Activated CD8-positive, alpha-beta memory T cell treated with anti-CD3 and anti-CD28 coated beads, Interleukin-2, amount 10 ng/mL, durations not matched to agents 7 days and 5 days (primary cell): ENCODE measurements at regions of chr11 and their contacts with region 1.

Region 1: GRCh38 chr11:124953753-124954589 is at the start of gene CCDC15:
- DNase-seq: peak; percentile 98
- ATAC-seq: peak; percentile 94
- H3K4me3 Mint-ChIP-seq: no peak within 1 kb of the TSS
- H3K27ac Mint-ChIP-seq: no peak within 1 kb of the TSS
- H3K4me1 Mint-ChIP-seq: peaks cover 20% of the 10 kb centered on the region
- H3K27me3 Mint-ChIP-seq: no peaks in the 10 kb centered on the region
- total RNA-seq, gene CCDC15: 5.6 to 9.4 TPM

Region 2: GRCh38 chr11:124509982-124510678 is 443.8 kb before region 1 on chr11:
- CTCF ChIA-PET with region 1: no interaction called
- DNase-seq: no peak
- ATAC-seq: no peak
- H3K4me3 Mint-ChIP-seq: no peak overlapping the region
- H3K27ac Mint-ChIP-seq: no peak overlapping the region
- H3K4me1 Mint-ChIP-seq: no peaks in the 10 kb centered on the region
- H3K27me3 Mint-ChIP-seq: peaks cover 5% of the 10 kb centered on the region

Region 3: GRCh38 chr11:124875943-124876817 is 77.8 kb before region 1 on chr11:
- CTCF ChIA-PET with region 1: interaction called, 18 read pairs
- DNase-seq: peak; percentile 87
- ATAC-seq: peak; percentile 96
- H3K4me3 Mint-ChIP-seq: peak overlapping the region; percentile 77
- H3K27ac Mint-ChIP-seq: peak overlapping the region; percentile 85
- H3K4me1 Mint-ChIP-seq: peaks cover 15% of the 10 kb centered on the region
- H3K27me3 Mint-ChIP-seq: peaks cover 31% of the 10 kb centered on the region

Region 4: DNA sequence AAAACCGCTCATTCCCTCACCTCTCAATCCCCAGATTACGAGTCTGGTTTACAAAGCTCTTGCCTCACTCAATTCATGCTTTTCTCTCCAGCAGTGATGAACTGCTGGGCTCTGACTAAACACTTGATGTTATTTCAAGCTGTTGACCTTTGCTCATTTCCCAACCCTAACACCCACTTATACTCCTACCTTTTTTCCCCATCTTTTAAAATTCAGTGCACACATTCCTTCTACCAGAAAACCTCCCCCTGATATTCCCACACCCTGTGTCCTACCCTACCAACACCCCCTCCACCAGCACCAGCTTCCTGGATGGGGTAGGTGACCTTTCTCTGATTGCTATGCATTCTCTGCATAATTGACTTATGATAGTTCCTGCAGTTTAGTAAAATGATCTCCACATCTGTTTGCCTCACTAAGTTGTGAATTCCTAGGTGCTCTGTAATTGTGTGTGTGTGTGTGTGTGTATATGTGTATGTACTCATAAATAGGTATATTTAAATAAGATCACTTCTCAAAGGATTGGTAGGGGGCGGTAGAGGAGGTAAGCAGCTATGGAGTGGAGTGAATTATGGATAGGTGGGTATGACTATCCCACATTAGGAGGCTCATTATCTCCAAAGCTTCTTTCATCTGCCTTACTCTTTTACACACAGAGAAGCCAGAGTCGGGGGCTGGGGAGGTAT is 19.0 kb before region 1 on chr11:
- CTCF ChIA-PET with region 1: interaction called, 12 read pairs
- DNase-seq: no peak
- ATAC-seq: no peak
- H3K4me3 Mint-ChIP-seq: no peak overlapping the region
- H3K27ac Mint-ChIP-seq: no peak overlapping the region
- H3K4me1 Mint-ChIP-seq: peaks cover 7% of the 10 kb centered on the region
- H3K27me3 Mint-ChIP-seq: peaks cover 16% of the 10 kb centered on the region